ENCODE measurements at regions of chr9 and their contacts with region 1.

Region 1: DNA sequence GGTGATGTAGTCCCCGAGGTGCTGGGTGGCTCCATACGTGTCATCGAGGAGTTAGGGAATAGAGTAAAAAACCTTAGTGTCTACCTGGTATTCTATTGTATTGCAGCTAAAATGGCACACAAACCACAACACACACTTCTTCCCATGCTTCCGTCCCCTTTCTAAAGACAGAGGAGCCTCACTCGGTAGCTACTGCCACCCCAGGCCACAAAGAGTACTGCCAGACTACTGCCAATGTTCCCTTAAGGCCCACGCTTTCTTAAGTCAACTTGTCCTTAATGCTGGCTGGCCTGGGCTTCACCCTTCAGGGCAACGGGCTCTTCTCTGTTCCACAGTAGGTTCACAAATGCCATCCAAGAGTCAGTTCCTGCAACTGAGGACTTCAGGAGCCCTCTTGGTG is 673.0 kb downstream of the ELAVL2 start:
- DNase-seq: no peak
- H3K4me3 Mint-ChIP-seq: no peak overlapping the region
- H3K27ac Mint-ChIP-seq: no peak overlapping the region
- H3K4me1 Mint-ChIP-seq: no peaks in the 10 kb centered on the region
- H3K27me3 Mint-ChIP-seq: no peaks in the 10 kb centered on the region
- CTCF ChIP-seq: no peak

Region 2: GRCh38 chr9:23288545-23288944 is 135.5 kb after region 1 on chr9:
- CTCF ChIA-PET with region 1: no interaction called
- intact Hi-C with region 1: loop called (anchors 10 kb)
- DNase-seq: no peak
- H3K4me3 Mint-ChIP-seq: no peak overlapping the region
- H3K27ac Mint-ChIP-seq: no peak overlapping the region
- H3K4me1 Mint-ChIP-seq: no peaks in the 10 kb centered on the region
- H3K27me3 Mint-ChIP-seq: no peaks in the 10 kb centered on the region
- CTCF ChIP-seq: no peak